Natural killer cell (primary cell): ENCODE measurements at regions of chr12 and their contacts with region 1.

Region 1: GRCh38 chr12:49098035-49098451 is 3.4 kb upstream of the DHH start:
- DNase-seq: peak; percentile 57 to 81
- ATAC-seq: peak; percentile 69 to 83 (median 71)
- H3K4me3 ChIP-seq: no peak overlapping the region
- H3K4me3 Mint-ChIP-seq: no peak overlapping the region
- H3K27ac ChIP-seq: no peak overlapping the region
- H3K27ac Mint-ChIP-seq: no peak overlapping the region
- H3K4me1 ChIP-seq: peaks cover 16% of the 10 kb centered on the region
- H3K4me1 Mint-ChIP-seq: peaks cover 17 to 19% of the 10 kb centered on the region in 2 donors
- H3K27me3 ChIP-seq: peaks cover 10% of the 10 kb centered on the region
- H3K27me3 Mint-ChIP-seq: peaks cover 16 to 18% of the 10 kb centered on the region in 2 donors
- CTCF ChIP-seq: peak; percentile 87

Region 2: GRCh38 chr12:49033611-49034316 is 64.3 kb before region 1 on chr12:
- intact Hi-C with region 1: no loop called
- DNase-seq: no peak
- ATAC-seq: no peak
- H3K4me3 ChIP-seq: no peak overlapping the region
- H3K4me3 Mint-ChIP-seq: no peak overlapping the region
- H3K27ac ChIP-seq: no peak overlapping the region
- H3K27ac Mint-ChIP-seq: peak overlapping the region; percentile 41 to 48
- H3K4me1 ChIP-seq: no peaks in the 10 kb centered on the region
- H3K4me1 Mint-ChIP-seq: peaks cover 0 to 5% of the 10 kb centered on the region in 2 donors
- H3K27me3 ChIP-seq: no peaks in the 10 kb centered on the region
- H3K27me3 Mint-ChIP-seq: no peaks in the 10 kb centered on the region
- CTCF ChIP-seq: no peak

Region 3: GRCh38 chr12:49060237-49061156 is 37.5 kb before region 1 on chr12 and contains the start of gene KMT2D:
- intact Hi-C with region 1: loop called (anchors 1 kb)
- DNase-seq: peak; percentile 83 to 96
- ATAC-seq: peak; percentile 79 to 88 (median 79)
- H3K4me3 ChIP-seq: peak within 1 kb of the TSS; percentile 68
- H3K4me3 Mint-ChIP-seq: peak within 1 kb of the TSS; percentile 91
- H3K27ac ChIP-seq: peak within 1 kb of the TSS; percentile 77
- H3K27ac Mint-ChIP-seq: peak within 1 kb of the TSS; percentile 87 to 92
- H3K4me1 ChIP-seq: peaks cover 47% of the 10 kb centered on the region
- H3K4me1 Mint-ChIP-seq: peaks cover 57% of the 10 kb centered on the region in 2 donors
- H3K27me3 ChIP-seq: no peaks in the 10 kb centered on the region
- H3K27me3 Mint-ChIP-seq: no peaks in the 10 kb centered on the region
- CTCF ChIP-seq: no peak
- total RNA-seq, gene KMT2D: 164 to 186 (median 182) TPM

Region 4: GRCh38 chr12:49187184-49187583 is 89.1 kb after region 1 on chr12:
- intact Hi-C with region 1: no loop called
- DNase-seq: peak in 1 of 2 donors; percentile 41
- ATAC-seq: no peak
- H3K4me3 ChIP-seq: no peak overlapping the region
- H3K4me3 Mint-ChIP-seq: peak overlapping the region; percentile 97
- H3K27ac ChIP-seq: no peak overlapping the region
- H3K27ac Mint-ChIP-seq: peak overlapping the region in 1 of 2 donors; percentile 96
- H3K4me1 ChIP-seq: peaks cover 10% of the 10 kb centered on the region
- H3K4me1 Mint-ChIP-seq: peaks cover 25 to 27% of the 10 kb centered on the region in 2 donors
- H3K27me3 ChIP-seq: no peaks in the 10 kb centered on the region
- H3K27me3 Mint-ChIP-seq: no peaks in the 10 kb centered on the region
- CTCF ChIP-seq: no peak